Activated CD4-positive, alpha-beta T cell treated with anti-CD3 and anti-CD28 coated beads, Interleukin-2, amount 10 ng/mL, durations not matched to agents 7 days and 5 days (primary cell): ENCODE measurements at regions of chr1 and their contacts with region 1.

Region 1: GRCh38 chr1:151858030-151858691 is 4.6 kb upstream of the THEM5 start:
- DNase-seq: no peak
- H3K4me3 Mint-ChIP-seq: no peak overlapping the region
- H3K27ac Mint-ChIP-seq: no peak overlapping the region
- H3K4me1 Mint-ChIP-seq: peaks cover 4% of the 10 kb centered on the region
- H3K27me3 Mint-ChIP-seq: no peaks in the 10 kb centered on the region

Region 2: GRCh38 chr1:151565502-151566189 is 292.5 kb before region 1 on chr1:
- CTCF ChIA-PET with region 1: no interaction called
- POLR2A ChIA-PET with region 1: no interaction called
- DNase-seq: no peak
- H3K4me3 Mint-ChIP-seq: no peak overlapping the region
- H3K27ac Mint-ChIP-seq: no peak overlapping the region
- H3K4me1 Mint-ChIP-seq: peaks cover 4% of the 10 kb centered on the region
- H3K27me3 Mint-ChIP-seq: no peaks in the 10 kb centered on the region

Region 3: DNA sequence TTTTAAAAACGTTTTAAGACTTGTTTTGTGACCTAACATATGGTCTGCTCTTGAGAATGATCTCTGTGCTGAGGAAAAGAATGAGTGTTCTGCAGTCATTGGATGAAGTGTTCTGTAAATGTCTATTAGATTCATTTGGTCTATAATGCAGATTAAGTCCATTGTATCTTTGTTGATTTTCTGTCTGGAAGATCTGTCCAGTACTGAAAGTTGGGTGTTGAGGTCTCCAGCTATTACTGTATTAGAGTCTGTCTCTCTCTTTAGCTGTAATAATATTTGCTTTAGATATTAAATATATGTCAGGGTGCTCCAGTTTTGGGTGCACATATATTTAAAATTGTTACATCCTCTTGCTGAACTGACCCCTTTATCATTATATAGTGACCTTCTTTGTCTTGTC is 184.8 kb before region 1 on chr1:
- CTCF ChIA-PET with region 1: no interaction called
- POLR2A ChIA-PET with region 1: no interaction called
- DNase-seq: no peak
- H3K4me3 Mint-ChIP-seq: no peak overlapping the region
- H3K27ac Mint-ChIP-seq: no peak overlapping the region
- H3K4me1 Mint-ChIP-seq: no peaks in the 10 kb centered on the region
- H3K27me3 Mint-ChIP-seq: no peaks in the 10 kb centered on the region

Region 4: DNA sequence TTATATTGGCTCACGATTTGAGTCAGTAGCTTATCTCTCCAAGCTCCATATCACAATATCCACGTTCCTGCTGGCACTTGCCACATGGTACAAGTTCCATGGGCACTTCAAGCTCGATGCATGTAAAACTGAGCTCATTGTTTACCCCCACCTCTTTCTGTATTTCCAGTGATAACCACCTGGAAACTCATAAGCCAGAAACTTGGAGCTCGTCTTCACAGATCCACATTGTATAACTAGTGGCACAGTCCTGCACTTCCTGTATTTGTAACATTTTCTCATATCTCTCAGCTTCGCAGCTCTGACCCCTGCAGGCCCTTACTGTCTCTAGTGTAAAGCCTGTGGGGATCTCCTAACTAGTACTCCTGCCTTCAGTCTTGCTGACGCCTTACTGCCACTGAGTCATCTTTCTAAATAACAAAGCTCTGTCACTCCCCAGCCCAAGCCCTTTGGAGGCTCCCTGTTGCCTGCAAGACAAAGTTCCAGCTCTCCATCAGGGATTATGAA is 12.0 kb before region 1 on chr1:
- CTCF ChIA-PET with region 1: interaction called, 39 read pairs
- POLR2A ChIA-PET with region 1: no interaction called
- DNase-seq: no peak
- H3K4me3 Mint-ChIP-seq: no peak overlapping the region
- H3K27ac Mint-ChIP-seq: peak overlapping the region; percentile 72
- H3K4me1 Mint-ChIP-seq: peaks cover 27% of the 10 kb centered on the region
- H3K27me3 Mint-ChIP-seq: no peaks in the 10 kb centered on the region

Region 5: GRCh38 chr1:151986501-151987190 is 128.5 kb after region 1 on chr1:
- CTCF ChIA-PET with region 1: no interaction called
- POLR2A ChIA-PET with region 1: no interaction called
- DNase-seq: no peak
- H3K4me3 Mint-ChIP-seq: no peak overlapping the region
- H3K27ac Mint-ChIP-seq: no peak overlapping the region
- H3K4me1 Mint-ChIP-seq: peaks cover 81% of the 10 kb centered on the region
- H3K27me3 Mint-ChIP-seq: no peaks in the 10 kb centered on the region

Region 6: DNA sequence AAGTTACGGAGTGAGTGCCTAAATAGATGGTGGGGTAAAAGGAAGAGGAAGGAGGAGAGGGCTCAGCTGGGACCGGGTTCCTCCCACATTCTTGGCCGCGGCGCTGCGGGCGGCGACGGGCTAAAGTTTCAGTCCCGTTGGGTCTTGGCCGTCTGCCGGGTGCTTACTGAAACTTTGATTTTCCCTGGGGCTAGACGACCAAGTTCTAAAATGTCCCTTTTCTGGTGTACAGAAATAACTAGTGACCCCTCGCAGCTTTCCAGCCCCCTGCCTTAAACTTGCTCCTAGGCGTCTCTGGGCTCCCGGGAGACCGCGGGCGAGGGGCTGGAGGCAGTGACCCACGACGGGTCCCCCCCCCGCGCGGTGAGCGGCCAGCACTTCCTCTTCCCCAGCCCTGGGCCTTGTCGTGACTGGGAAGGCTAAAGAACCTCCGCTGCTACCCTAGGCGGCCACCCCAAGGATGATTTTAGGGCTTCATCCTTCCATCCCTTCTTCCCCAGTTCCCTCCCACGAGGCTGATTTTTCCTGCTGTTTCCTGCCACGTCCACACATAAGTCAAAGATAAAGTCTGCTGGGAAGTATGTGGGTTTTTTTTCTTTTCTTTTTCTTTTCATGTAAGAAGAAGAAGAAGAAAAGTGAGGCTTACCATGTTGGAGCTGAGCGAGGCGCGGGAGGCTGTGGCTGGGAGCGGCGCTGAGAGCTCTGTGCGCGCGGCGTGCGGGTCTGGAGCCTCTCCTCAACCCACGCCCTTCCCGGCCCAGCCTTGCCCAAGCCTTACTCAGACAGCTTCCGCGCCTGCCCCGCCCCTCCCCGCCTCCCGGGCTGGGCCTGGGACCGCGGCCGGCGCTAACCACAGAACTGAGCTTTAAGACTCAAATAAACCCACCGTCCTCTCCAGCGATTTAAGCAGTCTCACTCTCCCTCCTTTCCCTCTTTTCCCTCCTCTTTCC is 178.4 kb after region 1 on chr1 and contains the start of gene S100A11:
- CTCF ChIA-PET with region 1: no interaction called
- POLR2A ChIA-PET with region 1: no interaction called
- DNase-seq: peak; percentile 72
- H3K4me3 Mint-ChIP-seq: peak within 1 kb of the TSS; percentile 98
- H3K27ac Mint-ChIP-seq: peak within 1 kb of the TSS; percentile 99
- H3K4me1 Mint-ChIP-seq: peaks cover 45% of the 10 kb centered on the region
- H3K27me3 Mint-ChIP-seq: no peaks in the 10 kb centered on the region
- total RNA-seq, gene S100A11: 367 to 412 TPM